ENCODE measurements at regions of chrX and their contacts with region 1.

Region 1: DNA sequence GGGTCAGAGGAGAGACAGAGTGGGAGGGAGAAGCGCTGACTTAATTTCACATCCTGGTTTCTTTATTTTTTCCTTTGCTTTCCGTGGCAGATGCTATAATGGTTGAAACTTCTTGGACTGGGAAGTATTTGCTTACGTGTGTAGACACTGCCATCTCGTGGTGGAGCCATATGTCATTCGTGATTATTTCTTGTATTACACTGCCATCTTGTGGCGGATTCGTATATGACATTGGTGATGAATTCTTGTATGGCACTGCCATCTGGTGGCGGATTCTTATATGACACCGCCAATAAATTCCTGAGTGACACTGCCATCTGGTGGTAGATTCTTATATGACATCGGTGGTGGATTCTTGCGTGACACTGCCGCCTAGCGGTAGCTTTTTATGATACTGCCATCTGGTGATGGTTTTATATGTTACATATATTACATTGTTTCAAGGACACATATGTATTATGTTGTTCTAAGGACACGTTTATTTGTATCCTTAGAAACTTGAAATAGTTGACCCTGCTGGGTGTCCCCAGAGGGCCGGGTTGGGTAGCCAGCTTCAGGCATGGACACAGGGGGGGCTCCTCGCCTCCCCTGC is 37.3 kb upstream of the CLCN4 start:
- DNase-seq: peak; percentile 45 to 46
- H3K4me3 ChIP-seq: no peak overlapping the region
- H3K27ac ChIP-seq: no peak overlapping the region
- H3K4me1 ChIP-seq: no peaks in the 10 kb centered on the region
- H3K27me3 ChIP-seq: no peaks in the 10 kb centered on the region
- CTCF ChIP-seq: peak; percentile 100

Region 2: GRCh38 chrX:8815464-8816065 is 1303.9 kb before region 1 on chrX:
- CTCF ChIA-PET with region 1: no interaction called
- POLR2A ChIA-PET with region 1: no interaction called
- intact Hi-C with region 1: loop called (anchors 5 kb)
- DNase-seq: peak in 1 of 2 experiments; percentile 34
- H3K4me3 ChIP-seq: no peak overlapping the region
- H3K27ac ChIP-seq: no peak overlapping the region
- H3K4me1 ChIP-seq: no peaks in the 10 kb centered on the region
- H3K27me3 ChIP-seq: no peaks in the 10 kb centered on the region
- CTCF ChIP-seq: peak; percentile 85

Region 3: DNA sequence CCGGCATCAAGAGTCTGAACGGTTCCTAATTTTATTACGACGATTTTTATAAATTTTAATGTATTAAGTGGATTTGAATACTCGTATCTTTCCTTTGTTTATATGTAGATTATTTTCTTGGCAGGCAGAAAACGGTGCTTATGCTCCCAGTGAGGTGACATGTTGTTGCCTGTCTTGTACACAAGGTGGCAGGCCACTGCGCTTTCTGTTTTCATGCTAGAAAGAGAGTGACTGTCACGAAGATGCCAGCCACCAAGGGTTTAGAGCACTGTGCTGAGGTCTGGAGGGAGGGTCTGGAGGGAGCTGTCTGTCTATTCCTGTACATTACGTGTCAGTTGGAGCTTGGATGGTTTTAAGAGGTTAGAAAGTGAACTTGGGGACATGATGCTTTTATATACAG is 245.5 kb before region 1 on chrX:
- CTCF ChIA-PET with region 1: no interaction called
- POLR2A ChIA-PET with region 1: no interaction called
- intact Hi-C with region 1: loop called (anchors 1 kb)
- DNase-seq: peak in 1 of 2 experiments; percentile 24
- H3K4me3 ChIP-seq: no peak overlapping the region
- H3K27ac ChIP-seq: peak overlapping the region; percentile 39; the same call in 1 of the 2 replicates
- H3K4me1 ChIP-seq: peaks cover 9% of the 10 kb centered on the region
- H3K27me3 ChIP-seq: no peaks in the 10 kb centered on the region
- CTCF ChIP-seq: peak; percentile 64

Region 4: DNA sequence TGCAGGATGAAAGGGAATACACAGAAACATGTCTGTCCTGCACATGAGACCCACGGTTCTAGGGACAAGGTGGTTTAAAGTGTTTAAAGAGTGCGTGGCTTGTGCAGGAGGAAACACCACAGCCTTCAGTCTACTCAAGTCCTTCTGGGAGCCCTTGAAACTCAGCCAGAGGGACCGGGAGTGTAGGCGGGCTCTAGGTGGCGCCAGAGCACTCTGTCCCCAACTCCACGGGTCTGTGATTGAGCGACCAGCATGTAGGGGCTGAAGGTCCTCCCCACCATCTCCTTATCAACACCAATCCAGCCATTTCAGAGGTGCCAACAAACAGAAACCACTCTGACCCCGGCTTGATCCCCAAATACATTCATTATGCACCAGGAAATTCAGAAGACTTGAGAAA is 234.3 kb before region 1 on chrX:
- CTCF ChIA-PET with region 1: no interaction called
- POLR2A ChIA-PET with region 1: no interaction called
- intact Hi-C with region 1: loop called (anchors 1 kb)
- DNase-seq: peak in 1 of 2 experiments; percentile 46
- H3K4me3 ChIP-seq: no peak overlapping the region
- H3K27ac ChIP-seq: no peak overlapping the region
- H3K4me1 ChIP-seq: no peaks in the 10 kb centered on the region
- H3K27me3 ChIP-seq: no peaks in the 10 kb centered on the region
- CTCF ChIP-seq: peak; percentile 75

Region 5: DNA sequence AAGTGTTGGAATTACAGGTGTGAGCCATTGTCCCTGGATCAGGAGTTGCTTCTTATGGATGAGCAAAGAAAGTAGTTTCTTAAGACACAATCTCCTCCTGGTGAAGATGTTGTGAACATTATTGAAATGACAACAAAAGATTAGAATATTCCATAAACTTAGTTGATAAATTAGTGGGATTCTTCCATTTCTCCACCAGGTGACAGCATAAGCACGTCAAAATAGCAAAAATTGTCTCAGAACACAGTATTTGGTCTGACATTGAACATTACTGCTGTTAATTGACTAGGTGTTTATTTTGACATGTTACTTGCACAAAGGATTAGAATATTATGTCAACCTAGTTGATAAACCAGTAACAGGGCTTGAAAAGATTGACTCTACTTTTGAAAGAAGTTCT is 130.7 kb before region 1 on chrX:
- CTCF ChIA-PET with region 1: no interaction called
- POLR2A ChIA-PET with region 1: no interaction called
- intact Hi-C with region 1: loop called (anchors 1 kb)
- DNase-seq: no peak
- H3K4me3 ChIP-seq: no peak overlapping the region
- H3K27ac ChIP-seq: no peak overlapping the region
- H3K4me1 ChIP-seq: no peaks in the 10 kb centered on the region
- H3K27me3 ChIP-seq: no peaks in the 10 kb centered on the region
- CTCF ChIP-seq: peak; percentile 70

Region 6: GRCh38 chrX:9995855-9996339 is 123.6 kb before region 1 on chrX:
- CTCF ChIA-PET with region 1: interaction called, 3 read pairs
- POLR2A ChIA-PET with region 1: no interaction called
- intact Hi-C with region 1: loop called (anchors 1 kb)
- DNase-seq: peak; percentile 52 to 69
- H3K4me3 ChIP-seq: no peak overlapping the region
- H3K27ac ChIP-seq: no peak overlapping the region
- H3K4me1 ChIP-seq: no peaks in the 10 kb centered on the region
- H3K27me3 ChIP-seq: no peaks in the 10 kb centered on the region
- CTCF ChIP-seq: peak; percentile 92

Measured in PC-9 (cell line).